ENCODE measurements at regions of chr2 and their contacts with region 1.

Region 1: GRCh38 chr2:182186132-182186735 is 200.6 kb downstream of the PPP1R1C start:
- DNase-seq: peak; percentile 46
- H3K4me3 ChIP-seq: no peak overlapping the region
- H3K27ac ChIP-seq: no peak overlapping the region
- H3K4me1 ChIP-seq: no peaks in the 10 kb centered on the region
- CTCF ChIP-seq: peak; percentile 91

Region 2: DNA sequence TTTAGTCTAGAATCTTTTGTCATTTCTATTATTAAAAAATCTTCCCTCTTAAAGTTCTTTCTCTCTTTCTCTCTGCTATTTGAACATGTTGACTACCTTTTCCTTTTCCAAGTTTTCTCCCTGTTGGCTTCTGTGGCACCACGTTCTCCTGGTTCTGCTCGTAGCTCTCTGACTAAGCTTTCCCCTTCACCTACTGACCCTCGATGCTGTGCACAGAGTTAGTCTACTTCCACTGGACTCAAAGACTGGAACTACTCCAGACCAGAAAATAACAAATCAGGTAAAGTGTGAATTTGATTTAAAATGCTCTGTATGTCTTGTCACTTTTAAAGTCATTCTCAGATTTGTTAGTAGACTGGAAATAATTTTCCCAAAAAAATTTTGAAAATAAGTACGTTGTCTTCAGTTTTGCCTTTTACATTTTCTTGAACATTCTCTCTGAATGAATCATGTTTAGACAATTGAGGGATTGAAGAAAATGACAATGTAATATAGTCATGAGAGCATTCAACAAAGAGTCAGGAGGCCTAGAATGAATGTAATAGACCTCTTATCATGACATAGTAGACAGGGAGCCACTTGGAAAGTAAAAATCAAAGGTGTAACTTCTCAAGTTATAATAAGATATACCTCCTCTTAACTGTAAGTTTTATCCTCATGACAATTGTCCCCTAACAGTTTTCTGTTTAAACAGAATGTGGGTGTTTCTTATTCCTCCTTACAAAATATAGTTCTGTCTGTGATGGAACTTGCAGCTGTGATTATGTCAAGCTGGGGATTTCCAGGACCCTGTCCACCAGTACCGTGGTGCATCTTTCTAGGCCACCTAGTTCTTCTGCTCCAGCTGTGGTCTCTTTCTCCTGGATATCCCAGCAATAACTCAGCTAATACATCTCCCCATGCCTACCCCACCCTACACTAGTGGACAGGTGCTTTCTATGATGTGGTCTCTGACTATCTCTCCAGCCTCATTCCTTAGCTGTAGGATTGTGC is 269.2 kb before region 1 on chr2:
- CTCF ChIA-PET with region 1: no interaction called
- POLR2A ChIA-PET with region 1: no interaction called
- intact Hi-C with region 1: no loop called
- DNase-seq: no peak
- H3K4me3 ChIP-seq: no peak overlapping the region
- H3K27ac ChIP-seq: no peak overlapping the region
- H3K4me1 ChIP-seq: no peaks in the 10 kb centered on the region
- CTCF ChIP-seq: no peak

Region 3: GRCh38 chr2:182064019-182064778 is 122.0 kb before region 1 on chr2:
- CTCF ChIA-PET with region 1: no interaction called
- POLR2A ChIA-PET with region 1: no interaction called
- intact Hi-C with region 1: no loop called
- DNase-seq: no peak
- H3K4me3 ChIP-seq: no peak overlapping the region
- H3K27ac ChIP-seq: no peak overlapping the region
- H3K4me1 ChIP-seq: no peaks in the 10 kb centered on the region
- CTCF ChIP-seq: no peak

Region 4: DNA sequence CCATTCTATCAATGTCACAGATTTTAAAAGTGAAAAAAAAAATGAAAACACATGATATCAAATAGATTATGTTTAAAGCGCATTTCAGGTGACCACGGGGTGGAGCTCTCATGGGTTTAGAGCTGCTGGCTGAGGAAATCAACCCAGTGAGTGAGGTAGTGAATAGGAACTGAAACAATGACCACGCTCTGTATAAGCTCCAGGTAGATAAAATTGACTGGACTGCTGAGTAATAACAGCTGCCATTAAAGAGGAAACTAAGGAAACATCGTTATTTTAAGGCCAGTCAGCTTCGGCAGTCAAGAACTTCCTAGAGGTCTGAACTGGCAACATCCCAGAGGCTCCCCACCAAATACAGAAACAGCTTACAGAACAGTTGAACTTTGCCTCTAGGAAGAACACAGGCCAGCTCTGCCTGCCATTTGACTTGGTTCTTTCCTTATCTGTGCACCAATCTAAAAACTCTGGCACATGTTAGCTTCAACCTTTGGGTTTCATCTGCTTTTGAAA is 54.7 kb after region 1 on chr2:
- CTCF ChIA-PET with region 1: no interaction called
- POLR2A ChIA-PET with region 1: no interaction called
- intact Hi-C with region 1: loop called (anchors 1 kb)
- DNase-seq: peak; percentile 54
- H3K4me3 ChIP-seq: no peak overlapping the region
- H3K27ac ChIP-seq: no peak overlapping the region
- H3K4me1 ChIP-seq: no peaks in the 10 kb centered on the region
- CTCF ChIP-seq: peak; percentile 89

Region 5: DNA sequence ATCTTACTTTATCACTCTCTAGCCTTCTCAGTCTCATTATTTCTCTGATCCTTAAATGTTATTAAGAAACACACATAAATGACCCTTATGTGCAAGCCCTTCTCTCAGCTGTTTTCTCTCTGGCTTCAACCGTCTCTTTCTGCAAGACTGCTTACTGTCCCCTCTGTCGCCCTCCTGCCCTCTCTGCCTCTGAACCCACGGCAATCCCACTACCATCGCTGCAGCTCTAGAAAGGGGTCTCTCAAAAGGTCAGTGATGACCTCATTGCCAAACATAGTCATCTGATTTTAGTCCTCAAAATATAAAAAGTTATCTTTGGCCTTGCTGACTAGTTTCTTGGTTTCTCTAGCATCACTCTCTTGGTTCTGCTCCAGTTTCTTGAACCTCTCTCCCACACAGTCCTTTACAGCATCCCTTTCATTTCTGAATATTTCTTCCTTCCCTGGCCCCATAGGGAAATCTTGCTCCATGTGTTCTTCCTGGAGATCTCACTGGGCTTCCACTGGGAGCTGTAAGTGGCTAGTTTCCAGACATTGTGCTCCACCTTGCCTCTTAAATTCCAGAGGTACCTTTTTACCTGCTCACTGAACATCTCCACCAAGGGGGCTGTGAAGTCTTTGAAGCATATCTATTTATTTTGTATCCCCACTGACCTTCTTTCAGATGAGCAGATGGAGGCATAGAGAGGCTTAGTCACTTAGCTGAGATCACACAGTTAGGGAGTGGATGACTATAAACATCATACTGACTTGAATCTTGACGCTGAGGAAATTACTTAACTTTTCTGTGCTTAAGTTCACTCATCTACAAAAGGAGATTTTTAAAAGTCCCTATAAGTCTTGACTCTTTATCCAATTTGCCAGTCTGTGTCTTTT is 144.5 kb after region 1 on chr2:
- CTCF ChIA-PET with region 1: no interaction called
- POLR2A ChIA-PET with region 1: no interaction called
- intact Hi-C with region 1: no loop called
- DNase-seq: no peak
- H3K4me3 ChIP-seq: no peak overlapping the region
- H3K27ac ChIP-seq: no peak overlapping the region
- H3K4me1 ChIP-seq: no peaks in the 10 kb centered on the region
- CTCF ChIP-seq: no peak

Region 6: GRCh38 chr2:182649316-182649715 is 463.1 kb after region 1 on chr2:
- CTCF ChIA-PET with region 1: no interaction called
- POLR2A ChIA-PET with region 1: no interaction called
- intact Hi-C with region 1: loop called (anchors 2 kb)
- DNase-seq: peak; percentile 26
- H3K4me3 ChIP-seq: no peak overlapping the region
- H3K27ac ChIP-seq: no peak overlapping the region
- H3K4me1 ChIP-seq: no peaks in the 10 kb centered on the region
- CTCF ChIP-seq: peak; percentile 72

Region 7: DNA sequence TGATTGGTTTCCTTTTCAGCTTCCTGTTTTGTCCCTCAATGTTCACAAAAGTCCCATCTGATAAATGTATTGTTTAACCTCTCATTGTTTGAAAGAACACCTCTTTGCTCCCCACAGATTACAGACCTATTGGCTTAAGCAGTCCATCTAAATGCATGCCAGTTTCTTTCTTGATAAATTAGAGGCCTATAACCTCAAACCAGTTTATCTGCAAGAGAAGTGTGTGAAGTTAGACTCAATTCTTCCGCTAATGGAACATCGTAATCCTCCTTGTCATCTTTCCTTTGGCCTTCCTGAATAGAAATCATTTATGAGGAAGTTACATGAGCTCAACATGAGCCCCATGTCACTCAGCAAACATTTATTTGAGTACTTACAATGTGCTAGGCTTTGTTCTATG is 606.2 kb after region 1 on chr2:
- CTCF ChIA-PET with region 1: no interaction called
- POLR2A ChIA-PET with region 1: no interaction called
- intact Hi-C with region 1: no loop called
- DNase-seq: no peak
- H3K4me3 ChIP-seq: no peak overlapping the region
- H3K27ac ChIP-seq: no peak overlapping the region
- H3K4me1 ChIP-seq: no peaks in the 10 kb centered on the region
- CTCF ChIP-seq: no peak